ENCODE measurements at regions of chr6 and their contacts with region 1.

Region 1: GRCh38 chr6:127641905-127642304 is 64.9 kb downstream of the C6orf58 start:
- DNase-seq: peak; percentile 41
- H3K4me3 ChIP-seq: no peak overlapping the region
- H3K27ac ChIP-seq: no peak overlapping the region
- H3K4me1 ChIP-seq: no peaks in the 10 kb centered on the region
- H3K27me3 ChIP-seq: peaks cover 8 to 26% of the 10 kb centered on the region in 2 experiments
- CTCF ChIP-seq: peak; percentile 47 to 52
- POLR2A ChIP-seq: no peak

Region 2: GRCh38 chr6:127464881-127465459 is 176.9 kb before region 1 on chr6:
- CTCF ChIA-PET with region 1: interaction called, 15 read pairs
- POLR2A ChIA-PET with region 1: no interaction called
- dilution Hi-C with region 1: no loop called
- intact Hi-C with region 1: loop called (anchors 1 kb)
- DNase-seq: peak; percentile 59
- H3K4me3 ChIP-seq: no peak overlapping the region
- H3K27ac ChIP-seq: no peak overlapping the region
- H3K4me1 ChIP-seq: no peaks in the 10 kb centered on the region
- H3K27me3 ChIP-seq: peaks cover 3 to 6% of the 10 kb centered on the region in 2 experiments
- CTCF ChIP-seq: peak; percentile 87 to 91
- POLR2A ChIP-seq: no peak

Region 3: GRCh38 chr6:127510876-127511275 is 131.0 kb before region 1 on chr6:
- CTCF ChIA-PET with region 1: no interaction called
- POLR2A ChIA-PET with region 1: no interaction called
- dilution Hi-C with region 1: no loop called
- intact Hi-C with region 1: no loop called
- DNase-seq: no peak
- H3K4me3 ChIP-seq: no peak overlapping the region
- H3K27ac ChIP-seq: no peak overlapping the region
- H3K4me1 ChIP-seq: peaks cover 5% of the 10 kb centered on the region
- H3K27me3 ChIP-seq: peaks cover 18 to 49% of the 10 kb centered on the region in 2 experiments
- CTCF ChIP-seq: no peak
- POLR2A ChIP-seq: no peak

Region 4: DNA sequence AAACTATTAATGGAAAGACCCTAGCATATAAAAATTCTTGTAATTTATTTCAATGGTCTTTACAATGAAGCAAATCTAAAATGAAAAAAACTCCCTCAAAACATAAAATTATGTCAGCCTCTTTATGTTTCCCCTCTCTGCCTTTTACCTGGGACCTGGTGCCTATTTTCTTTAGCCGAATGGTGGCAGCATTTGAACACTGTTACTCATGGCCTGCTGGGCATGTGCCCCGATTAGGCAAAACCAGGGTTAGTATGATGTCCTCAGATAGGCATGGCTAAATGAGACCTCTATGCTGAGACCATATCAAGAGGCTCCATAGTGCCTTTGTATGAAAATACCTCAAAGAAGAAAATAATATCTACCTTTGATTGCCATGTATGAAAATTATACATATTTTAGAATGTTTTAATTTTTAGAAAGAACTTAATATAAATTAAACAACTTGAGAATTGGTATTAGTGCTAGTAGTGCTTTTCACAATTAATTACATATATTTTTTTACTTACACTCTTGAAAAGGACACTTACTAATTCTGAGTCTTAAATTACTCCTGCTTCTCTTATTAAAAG is 87.4 kb before region 1 on chr6:
- CTCF ChIA-PET with region 1: interaction called, 44 read pairs
- POLR2A ChIA-PET with region 1: no interaction called
- dilution Hi-C with region 1: no loop called
- intact Hi-C with region 1: loop called (anchors 1 kb)
- DNase-seq: peak; percentile 27
- H3K4me3 ChIP-seq: no peak overlapping the region
- H3K27ac ChIP-seq: no peak overlapping the region
- H3K4me1 ChIP-seq: no peaks in the 10 kb centered on the region
- H3K27me3 ChIP-seq: peaks cover 4 to 10% of the 10 kb centered on the region in 2 experiments
- CTCF ChIP-seq: peak in 1 of 2 donors; percentile 32
- POLR2A ChIP-seq: no peak

Region 5: GRCh38 chr6:127606131-127606562 is 35.8 kb before region 1 on chr6:
- CTCF ChIA-PET with region 1: interaction called, 14 read pairs
- POLR2A ChIA-PET with region 1: no interaction called
- dilution Hi-C with region 1: no loop called
- intact Hi-C with region 1: no loop called
- DNase-seq: peak; percentile 11
- H3K4me3 ChIP-seq: no peak overlapping the region
- H3K27ac ChIP-seq: no peak overlapping the region
- H3K4me1 ChIP-seq: no peaks in the 10 kb centered on the region
- H3K27me3 ChIP-seq: peaks cover 3 to 7% of the 10 kb centered on the region in 2 experiments
- CTCF ChIP-seq: peak in 1 of 2 donors; percentile 6
- POLR2A ChIP-seq: no peak

Region 6: DNA sequence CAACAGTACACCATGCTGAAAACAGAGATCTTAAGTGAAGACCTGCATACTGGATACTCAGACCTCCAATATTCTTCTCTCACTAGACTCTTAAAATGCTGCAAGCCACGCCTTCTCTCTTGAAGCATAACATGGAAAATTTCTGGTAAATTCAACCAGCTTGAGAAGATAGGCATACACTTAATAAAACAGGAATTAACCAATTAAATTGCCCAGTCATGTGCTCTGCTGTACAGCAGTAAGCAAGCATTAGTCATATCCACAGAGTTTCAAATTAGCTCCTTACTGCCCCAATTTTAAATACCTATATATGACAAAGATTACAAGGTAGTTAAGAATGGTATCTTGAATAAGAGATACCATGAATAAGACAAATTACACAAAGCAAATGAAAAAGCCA is 11.1 kb before region 1 on chr6:
- CTCF ChIA-PET with region 1: interaction called, 11 read pairs
- POLR2A ChIA-PET with region 1: no interaction called
- dilution Hi-C with region 1: no loop called
- intact Hi-C with region 1: no loop called
- DNase-seq: no peak
- H3K4me3 ChIP-seq: no peak overlapping the region
- H3K27ac ChIP-seq: no peak overlapping the region
- H3K4me1 ChIP-seq: no peaks in the 10 kb centered on the region
- H3K27me3 ChIP-seq: peaks cover 2 to 21% of the 10 kb centered on the region in 2 experiments
- CTCF ChIP-seq: no peak
- POLR2A ChIP-seq: no peak